ENCODE measurements at regions of chr2 and their contacts with region 1.

Region 1: DNA sequence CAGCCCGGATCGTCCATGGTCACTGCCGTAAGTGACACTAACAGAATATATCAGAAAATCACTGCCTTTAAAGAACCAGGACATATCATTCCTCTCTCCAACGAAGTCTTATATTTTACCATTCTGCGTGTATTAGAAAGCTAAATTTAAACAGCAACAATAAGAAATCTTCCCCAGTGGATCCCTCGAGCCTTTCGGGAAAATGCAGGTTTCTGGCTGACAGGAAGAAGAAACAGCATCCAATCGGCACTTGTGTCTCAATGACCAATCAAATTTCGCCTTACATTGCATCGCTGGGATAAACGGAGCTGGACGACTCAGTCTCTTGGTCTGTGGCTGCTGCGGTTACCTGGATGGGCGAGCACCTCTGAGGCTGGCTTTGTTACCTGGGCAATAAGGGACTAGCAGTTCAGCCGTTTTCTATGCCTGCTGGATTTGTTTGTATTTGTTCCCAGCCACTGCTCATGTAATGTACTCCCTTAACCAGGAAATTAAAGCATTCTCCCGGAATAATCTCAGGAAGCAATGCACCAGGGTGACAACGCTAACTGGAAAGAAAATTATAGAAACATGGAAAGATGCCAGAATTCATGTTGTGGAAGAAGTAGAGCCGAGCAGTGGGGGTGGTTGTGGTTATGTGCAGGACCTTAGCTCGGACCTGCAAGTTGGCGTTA is at the start of gene DUSP19:
- DNase-seq: peak; percentile 97 to 99 (median 98)
- ATAC-seq: peak; percentile 90
- H3K4me3 ChIP-seq: peak within 1 kb of the TSS; percentile 58
- H3K27ac ChIP-seq: peak within 1 kb of the TSS; percentile 68
- H3K4me1 ChIP-seq: peaks cover 0 to 13% of the 10 kb centered on the region in 2 experiments; a peak in 2 of 5 replicates
- H3K27me3 ChIP-seq: no peaks in the 10 kb centered on the region
- CTCF ChIP-seq: no peak
- EP300 ChIP-seq: no peak
- POLR2A ChIP-seq: peak; percentile 93
- RAD21 ChIP-seq: no peak; a peak in 1 of 4 replicates
- polyA plus RNA-seq, gene DUSP19: 2.7 to 3.1 TPM

Region 2: DNA sequence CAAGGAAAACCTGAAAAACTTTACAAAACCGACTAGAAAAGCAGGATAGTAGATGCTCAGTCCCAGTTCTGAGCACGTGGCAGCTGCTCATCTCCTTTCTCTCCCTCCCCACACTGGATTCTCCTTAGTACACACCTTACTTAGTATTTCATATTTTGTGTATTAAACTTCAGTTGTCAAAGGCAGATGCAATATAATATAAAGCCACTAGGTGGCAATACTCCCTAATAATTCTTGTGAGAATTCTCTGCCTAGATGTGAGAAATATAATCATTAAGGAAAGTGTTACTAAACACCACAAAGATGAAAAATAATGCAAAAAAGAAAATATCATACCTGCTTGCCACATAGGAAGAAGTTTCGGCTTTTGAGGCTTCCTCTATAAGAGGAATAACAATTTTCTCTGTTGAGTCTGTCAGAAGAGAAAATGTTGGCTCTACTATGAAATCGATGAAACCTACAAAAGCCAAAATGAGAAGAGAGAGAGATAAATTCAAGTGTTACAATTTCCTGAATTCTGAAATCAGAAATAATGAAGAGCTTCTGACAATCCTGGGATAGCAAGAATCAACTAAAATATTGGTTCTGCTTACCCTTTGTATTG is 892.4 kb before region 1 on chr2:
- CTCF ChIA-PET with region 1: no interaction called
- POLR2A ChIA-PET with region 1: no interaction called
- in situ Hi-C with region 1: no loop called
- intact Hi-C with region 1: no loop called
- DNase-seq: peak; percentile 13 to 51 (median 16)
- ATAC-seq: peak; percentile 83
- H3K4me3 ChIP-seq: no peak overlapping the region
- H3K27ac ChIP-seq: no peak overlapping the region
- H3K4me1 ChIP-seq: no peaks in the 10 kb centered on the region
- H3K27me3 ChIP-seq: no peaks in the 10 kb centered on the region
- CTCF ChIP-seq: peak; percentile 57 to 88 (median 63); a peak in 5 of 6 replicates
- EP300 ChIP-seq: no peak
- POLR2A ChIP-seq: no peak
- RAD21 ChIP-seq: peak; percentile 89 to 90

Region 3: DNA sequence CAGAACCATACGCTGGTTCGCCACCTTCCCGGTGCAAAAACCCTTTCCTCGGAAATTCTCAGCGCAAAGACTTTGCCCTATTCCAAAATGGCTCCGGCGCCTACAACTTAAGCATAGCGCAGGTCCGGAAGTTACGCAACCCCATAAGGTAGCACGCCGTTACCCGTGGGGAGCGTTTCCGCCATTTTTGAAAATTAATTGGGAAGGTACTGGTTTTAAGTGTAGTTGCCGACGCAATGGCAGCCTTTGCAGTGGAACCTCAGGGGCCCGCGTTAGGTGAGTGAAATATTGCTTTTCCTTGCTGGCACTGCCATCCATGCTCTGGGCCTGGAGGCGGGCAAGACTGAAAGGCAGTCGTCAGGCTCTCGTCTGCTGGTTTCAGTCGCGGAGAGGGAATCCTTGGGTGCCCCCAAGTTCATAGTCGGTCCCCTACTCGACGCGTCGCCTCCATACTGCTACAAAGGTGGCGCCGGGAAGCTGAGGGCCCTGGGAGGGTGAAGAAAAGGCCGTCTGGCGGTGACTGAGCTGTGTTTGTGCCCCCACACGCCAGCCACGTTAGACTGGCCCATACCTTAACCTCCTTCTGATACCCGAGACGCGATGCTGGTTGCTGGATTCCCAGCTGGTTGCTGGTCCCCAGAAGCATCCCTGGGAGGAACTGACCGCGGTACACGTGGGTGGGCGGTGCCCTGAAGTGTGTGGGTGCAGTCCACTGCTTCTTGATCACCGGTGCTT is 45.8 kb after region 1 on chr2 and contains the start of gene NUP35:
- CTCF ChIA-PET with region 1: no interaction called
- POLR2A ChIA-PET with region 1: interaction called, 4 read pairs
- in situ Hi-C with region 1: no loop called
- intact Hi-C with region 1: loop called (anchors 1 kb)
- DNase-seq: peak; percentile 80 to 95 (median 84)
- ATAC-seq: peak; percentile 90
- H3K4me3 ChIP-seq: peak within 1 kb of the TSS; percentile 54
- H3K27ac ChIP-seq: peak within 1 kb of the TSS; percentile 89
- H3K4me1 ChIP-seq: peaks cover 6 to 9% of the 10 kb centered on the region in 2 experiments; a peak in 2 of 5 replicates
- H3K27me3 ChIP-seq: no peaks in the 10 kb centered on the region
- CTCF ChIP-seq: no peak
- EP300 ChIP-seq: peak; percentile 50; the same call in 1 of the 2 replicates
- POLR2A ChIP-seq: peak; percentile 95
- RAD21 ChIP-seq: peak in 1 of 2 experiments; percentile 1; a peak in 1 of 4 replicates
- polyA plus RNA-seq, gene NUP35: 71.0 to 78.2 TPM